CD4-positive, alpha-beta T cell (primary cell): ENCODE measurements at regions of chr1 and their contacts with region 1.

Region 1: DNA sequence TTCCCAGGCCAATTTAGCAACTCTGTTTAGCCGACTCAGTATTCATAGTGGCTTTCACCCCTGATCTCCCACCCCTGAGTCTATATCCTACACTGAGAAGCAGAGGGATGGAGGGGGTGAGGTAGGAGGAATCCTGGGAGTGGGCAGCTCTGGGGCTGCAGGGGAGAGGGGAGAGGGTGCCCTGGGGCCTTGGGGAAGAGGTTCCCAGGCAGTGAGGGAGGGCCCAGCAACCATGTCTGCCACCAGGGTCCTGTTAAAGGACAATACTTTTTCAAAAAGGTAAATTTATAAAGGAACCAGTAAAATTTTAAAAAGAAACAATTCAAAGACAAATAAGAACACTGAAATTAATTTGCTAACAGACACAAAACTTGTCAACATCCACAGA is 30.3 kb downstream of the EPHX1 start:
- DNase-seq: no peak
- ATAC-seq: no peak
- H3K4me3 ChIP-seq: no peak overlapping the region
- H3K4me3 Mint-ChIP-seq: no peak overlapping the region
- H3K27ac ChIP-seq: no peak overlapping the region
- H3K27ac Mint-ChIP-seq: peak overlapping the region; percentile 69
- H3K4me1 ChIP-seq: peaks cover 25% of the 10 kb centered on the region
- H3K4me1 Mint-ChIP-seq: peaks cover 36% of the 10 kb centered on the region
- H3K27me3 ChIP-seq: no peaks in the 10 kb centered on the region
- H3K27me3 Mint-ChIP-seq: no peaks in the 10 kb centered on the region
- CTCF ChIP-seq: no peak

Region 2: DNA sequence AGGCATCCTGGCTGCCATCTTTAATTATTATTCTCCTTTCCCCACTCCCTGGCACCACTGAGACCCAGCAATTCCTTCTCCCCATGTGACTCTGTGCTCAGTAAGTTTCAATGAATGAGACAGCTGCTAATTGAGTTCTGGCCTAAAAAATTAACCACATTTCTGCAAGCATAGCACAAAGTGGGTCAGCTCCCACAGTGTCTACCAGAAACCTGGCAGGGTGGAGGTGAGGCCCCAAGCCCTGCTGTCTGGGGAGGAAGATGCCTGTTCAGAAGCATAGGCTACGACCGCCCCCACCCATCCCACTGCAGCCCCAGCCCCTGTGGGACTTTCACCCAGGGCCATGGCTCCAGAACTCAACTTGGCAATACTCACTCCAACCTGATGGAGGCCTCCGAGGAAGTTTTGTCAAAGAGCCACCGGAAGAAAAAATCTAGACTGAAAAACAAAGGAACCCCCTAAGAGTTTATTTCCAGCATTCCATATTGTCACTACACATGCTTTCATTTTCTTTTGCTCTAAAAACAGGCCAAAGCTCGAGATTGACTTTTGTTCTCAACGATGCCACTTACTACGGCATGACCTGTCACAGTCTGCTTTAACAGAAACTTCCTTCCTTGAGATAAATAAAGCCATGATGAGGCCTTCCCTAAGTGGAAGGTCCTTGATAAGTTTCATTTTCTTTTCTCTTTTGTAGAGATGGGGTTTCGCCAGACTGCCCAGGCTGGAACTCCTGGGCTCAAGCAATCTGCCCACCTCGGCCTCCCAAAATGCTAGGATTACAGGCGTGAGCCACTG is 15.5 kb after region 1 on chr1:
- CTCF ChIA-PET with region 1: no interaction called
- POLR2A ChIA-PET with region 1: interaction called, 18 read pairs
- intact Hi-C with region 1: no loop called
- DNase-seq: no peak
- ATAC-seq: peak; percentile 37
- H3K4me3 ChIP-seq: no peak overlapping the region
- H3K4me3 Mint-ChIP-seq: no peak overlapping the region
- H3K27ac ChIP-seq: peak overlapping the region in 1 of 2 donors; percentile 15
- H3K27ac Mint-ChIP-seq: peak overlapping the region; percentile 81
- H3K4me1 ChIP-seq: peaks cover 46% of the 10 kb centered on the region
- H3K4me1 Mint-ChIP-seq: peaks cover 27% of the 10 kb centered on the region
- H3K27me3 ChIP-seq: no peaks in the 10 kb centered on the region
- H3K27me3 Mint-ChIP-seq: no peaks in the 10 kb centered on the region
- CTCF ChIP-seq: no peak